GM10248 (cell line): ENCODE measurements at regions of chr10 and their contacts with region 1.

Region 1: DNA sequence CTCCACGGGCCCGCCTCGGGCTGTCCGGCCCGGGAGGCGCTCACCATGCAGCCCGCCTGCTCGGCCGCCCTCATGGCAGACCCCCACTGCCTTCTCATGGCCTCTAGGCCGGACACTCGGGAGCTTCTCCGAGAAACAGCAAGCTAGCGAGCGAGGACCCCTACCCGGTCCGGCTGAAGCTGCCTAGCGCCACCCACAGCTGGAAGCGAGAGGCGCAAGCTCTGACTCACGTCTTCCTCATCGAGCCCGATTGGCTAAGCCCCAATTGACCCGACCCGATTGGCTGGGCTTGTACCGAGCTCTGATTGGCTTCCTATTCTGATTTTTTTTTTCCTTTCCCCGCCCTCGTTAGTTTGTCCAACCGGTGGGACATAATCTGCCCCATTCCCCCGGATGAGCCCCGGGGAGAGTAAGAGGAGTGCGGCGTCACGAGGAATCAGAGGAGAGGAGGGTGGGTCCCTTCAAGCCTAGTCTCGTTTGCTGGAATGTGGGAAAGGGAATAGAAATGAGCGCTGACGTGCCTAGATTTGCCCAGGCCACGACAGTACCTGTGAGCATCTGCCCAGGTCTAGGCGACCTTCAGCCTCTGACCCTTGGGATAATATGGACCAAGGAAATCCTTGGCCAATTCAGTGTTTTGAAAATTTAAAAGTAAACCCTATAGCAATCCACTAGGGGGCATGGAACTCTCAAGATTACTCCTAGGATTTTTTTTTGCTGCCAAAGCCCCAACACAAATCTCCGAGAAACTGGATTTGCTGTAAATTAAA is at the start of gene TYSND1:
- DNase-seq: peak; percentile 97
- CTCF ChIP-seq: peak; percentile 85

Region 2: DNA sequence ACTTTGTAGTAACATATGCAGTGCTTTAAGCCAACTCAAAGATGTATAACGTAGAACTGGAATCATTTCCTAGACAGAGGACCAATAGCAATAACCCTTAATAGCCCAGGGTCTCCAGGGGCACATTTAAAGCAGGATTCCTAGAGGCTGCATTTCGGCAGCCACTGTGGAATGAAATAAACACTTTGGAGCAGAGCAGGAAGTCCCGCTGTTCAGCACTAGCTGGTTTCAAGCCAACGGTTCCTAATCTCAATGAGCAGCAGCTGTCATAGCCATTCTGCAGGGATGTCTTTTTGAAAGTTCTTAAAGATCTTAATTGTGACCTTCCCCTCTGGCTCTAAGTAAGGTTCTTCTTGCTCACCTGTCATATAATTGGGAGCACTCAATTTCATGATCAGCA is 112.4 kb before region 1 on chr10:
- CTCF ChIA-PET with region 1: no interaction called
- POLR2A ChIA-PET with region 1: no interaction called
- DNase-seq: no peak
- CTCF ChIP-seq: no peak

Region 3: GRCh38 chr10:70106958-70107791 is 39.5 kb before region 1 on chr10:
- CTCF ChIA-PET with region 1: interaction called, 27 read pairs
- POLR2A ChIA-PET with region 1: interaction called, 3 read pairs
- DNase-seq: peak; percentile 69
- CTCF ChIP-seq: peak; percentile 55

Region 4: DNA sequence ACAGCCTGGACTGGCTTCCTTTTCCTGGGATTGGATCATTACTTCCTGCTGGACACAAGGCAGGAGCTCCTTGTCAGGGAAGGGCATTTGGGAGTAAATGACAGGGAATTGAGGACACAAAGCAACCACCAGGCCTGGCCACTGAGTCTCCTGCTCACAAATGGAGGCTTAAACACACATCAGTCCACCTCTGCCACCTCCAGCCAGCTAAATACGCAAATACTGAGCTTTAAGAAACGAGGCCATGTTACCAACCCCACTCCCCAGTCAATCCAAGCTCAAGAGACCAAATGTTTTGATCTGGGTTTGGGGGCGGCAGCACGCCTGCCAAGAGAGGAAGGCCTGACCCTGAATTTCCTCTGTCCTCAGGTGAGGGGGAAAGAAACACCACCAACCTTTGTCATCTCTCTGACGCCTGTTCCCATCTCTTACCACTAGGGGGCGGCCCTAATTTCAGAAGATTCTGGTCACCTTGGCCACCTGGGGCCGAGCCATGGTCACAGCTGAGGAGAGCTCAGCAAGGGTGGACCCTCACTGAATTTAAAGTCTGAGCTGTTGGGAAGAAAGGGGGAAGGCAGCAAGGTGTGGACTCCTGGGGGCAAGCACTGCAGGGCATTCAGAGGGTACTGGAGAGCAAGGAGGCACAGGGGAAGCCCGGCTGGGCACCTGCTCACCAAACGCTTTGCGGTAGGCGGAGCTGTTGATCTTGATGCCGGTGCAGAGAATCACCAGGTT is 30.6 kb before region 1 on chr10:
- CTCF ChIA-PET with region 1: interaction called, 77 read pairs
- POLR2A ChIA-PET with region 1: interaction called, 7 read pairs
- DNase-seq: peak; percentile 83
- CTCF ChIP-seq: peak; percentile 77

Region 5: GRCh38 chr10:70125918-70126552 is 20.6 kb before region 1 on chr10:
- CTCF ChIA-PET with region 1: interaction called, 16 read pairs
- POLR2A ChIA-PET with region 1: no interaction called
- DNase-seq: no peak
- CTCF ChIP-seq: no peak

Region 6: DNA sequence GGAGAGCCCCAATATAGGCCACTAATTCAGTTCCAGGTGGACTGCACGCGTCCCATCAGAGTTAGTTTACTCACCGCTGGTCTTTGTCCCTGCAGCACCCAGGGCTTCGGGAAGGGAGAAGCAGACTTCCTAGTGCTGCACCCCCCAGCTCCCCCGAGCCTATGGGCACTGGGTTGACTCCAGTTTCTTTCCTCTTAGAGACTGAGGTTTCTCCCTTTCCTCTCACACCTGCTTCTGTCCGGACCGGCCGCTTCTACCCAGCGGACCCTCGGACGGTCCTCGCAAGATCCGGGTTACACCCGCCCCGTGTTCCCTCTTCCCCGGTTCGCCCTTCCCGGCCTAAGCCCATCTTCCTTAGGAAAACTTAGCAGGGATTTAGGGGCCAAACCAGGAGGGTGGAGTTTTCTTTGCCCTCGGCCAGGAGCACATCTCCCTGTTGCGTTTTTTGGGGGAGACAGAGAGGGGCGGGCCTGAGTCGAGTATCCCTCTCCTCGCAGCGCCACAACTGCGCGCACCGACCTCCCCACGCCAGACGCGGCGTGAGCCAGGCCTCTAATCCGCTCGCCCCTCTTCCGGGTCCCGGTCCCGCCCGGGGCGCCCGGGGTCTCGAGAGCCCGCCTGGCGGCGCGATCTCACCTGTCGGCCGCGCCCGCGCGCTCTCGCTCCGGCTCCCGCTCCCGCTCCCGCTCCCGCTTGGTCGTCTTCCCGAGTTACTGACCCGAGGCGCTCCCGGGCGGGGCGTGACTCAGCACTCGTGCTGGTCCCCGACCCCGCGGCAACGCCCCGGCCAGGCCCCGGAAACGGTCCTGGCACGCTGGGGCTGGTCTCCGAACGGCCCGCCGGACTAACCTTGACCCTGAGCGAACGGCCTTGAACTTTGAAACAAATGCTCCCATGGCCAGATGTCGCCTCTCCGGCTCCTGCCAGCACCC is 14.3 kb before region 1 on chr10 and contains the start of gene AIFM2:
- CTCF ChIA-PET with region 1: interaction called, 60 read pairs
- POLR2A ChIA-PET with region 1: no interaction called
- DNase-seq: peak; percentile 82
- CTCF ChIP-seq: no peak

Region 7: GRCh38 chr10:70162892-70163201 is 16.2 kb after region 1 on chr10:
- CTCF ChIA-PET with region 1: interaction called, 51 read pairs
- POLR2A ChIA-PET with region 1: interaction called, 7 read pairs
- DNase-seq: peak; percentile 72
- CTCF ChIP-seq: no peak

Region 8: DNA sequence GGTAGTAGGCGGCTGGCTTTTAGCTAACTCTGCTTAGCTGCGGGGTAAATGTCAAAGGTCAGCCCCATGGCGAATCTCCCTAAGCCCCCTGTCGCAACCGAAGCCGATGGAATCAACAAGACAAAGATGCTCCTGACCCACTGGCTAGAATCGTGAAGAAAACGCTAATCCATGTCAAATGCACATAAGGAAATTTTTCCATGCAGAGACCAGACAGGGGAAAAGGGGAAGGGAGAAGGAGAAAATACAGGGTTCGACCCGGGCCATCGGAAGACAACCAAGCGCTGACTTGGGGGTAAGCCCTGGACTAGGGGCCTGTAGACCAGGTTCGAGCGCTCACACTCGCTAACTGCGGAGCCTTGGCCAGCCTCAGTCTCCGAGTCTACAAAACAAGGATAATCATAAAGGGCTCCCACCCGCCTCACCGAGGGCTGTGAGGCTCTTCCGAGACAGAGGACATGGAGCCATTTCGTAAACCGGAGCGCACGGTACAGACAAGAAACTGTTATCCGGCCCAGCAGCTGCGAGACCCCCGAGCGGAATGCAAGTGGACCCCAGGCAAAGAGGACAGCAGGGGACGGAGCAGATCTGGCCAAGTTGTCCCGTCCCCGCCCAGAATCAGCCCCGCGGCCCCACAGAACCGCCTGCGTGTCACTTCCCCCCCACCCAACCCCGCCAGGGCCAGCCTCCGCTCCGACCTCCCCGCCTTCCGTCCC is 23.1 kb after region 1 on chr10:
- CTCF ChIA-PET with region 1: interaction called, 44 read pairs
- POLR2A ChIA-PET with region 1: interaction called, 15 read pairs
- DNase-seq: no peak
- CTCF ChIP-seq: no peak